GM18951 (cell line): ENCODE measurements at regions of chr16 and their contacts with region 1.

Region 1: DNA sequence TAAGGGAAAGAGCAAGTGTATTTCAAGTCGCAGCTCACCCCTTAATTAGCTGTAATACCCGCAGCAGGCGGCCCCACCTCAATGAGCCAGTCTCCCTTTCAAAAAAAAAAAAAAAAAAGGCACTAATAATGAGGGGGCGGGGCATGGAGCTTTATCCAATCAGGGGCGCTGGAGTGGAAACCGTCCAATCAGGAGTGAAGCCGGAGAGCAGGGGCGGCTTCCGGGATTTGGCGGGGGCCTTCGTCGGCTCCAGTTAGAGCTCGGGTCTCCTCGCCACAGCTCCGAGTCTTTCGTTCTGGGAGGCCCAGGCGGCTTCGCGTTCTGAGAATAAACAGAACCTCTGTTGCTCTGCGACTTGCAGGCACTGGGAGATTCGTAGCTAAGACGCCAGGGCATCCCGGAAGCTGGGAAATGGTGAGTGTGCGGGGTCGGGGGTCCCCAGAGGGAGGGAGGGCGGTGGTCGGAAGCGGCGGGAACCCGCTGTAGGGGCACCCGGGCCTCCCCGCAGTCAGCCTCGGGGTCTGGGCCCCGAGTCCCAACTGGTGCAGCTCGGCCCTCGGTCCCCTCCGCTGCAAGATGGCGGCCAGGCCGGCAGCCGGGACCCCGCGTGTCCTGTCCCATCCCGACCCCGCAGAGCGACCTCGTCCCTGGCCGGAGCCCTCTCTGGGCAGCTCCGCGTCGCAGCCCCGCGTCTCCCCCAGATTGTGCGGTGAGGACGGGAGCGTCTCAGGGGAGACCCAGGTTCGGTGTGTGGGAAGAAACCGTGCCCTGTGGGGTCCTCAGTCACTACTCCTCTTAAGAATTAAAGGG is at the start of gene ZNF267:
- POLR2A ChIP-seq: peak; percentile 88

Region 2: GRCh38 chr16:30984669-30985400 is 888.9 kb before region 1 on chr16 and contains the start of gene HSD3B7:
- in situ Hi-C with region 1: loop called (anchors 25 kb)
- POLR2A ChIP-seq: no peak

Region 3: DNA sequence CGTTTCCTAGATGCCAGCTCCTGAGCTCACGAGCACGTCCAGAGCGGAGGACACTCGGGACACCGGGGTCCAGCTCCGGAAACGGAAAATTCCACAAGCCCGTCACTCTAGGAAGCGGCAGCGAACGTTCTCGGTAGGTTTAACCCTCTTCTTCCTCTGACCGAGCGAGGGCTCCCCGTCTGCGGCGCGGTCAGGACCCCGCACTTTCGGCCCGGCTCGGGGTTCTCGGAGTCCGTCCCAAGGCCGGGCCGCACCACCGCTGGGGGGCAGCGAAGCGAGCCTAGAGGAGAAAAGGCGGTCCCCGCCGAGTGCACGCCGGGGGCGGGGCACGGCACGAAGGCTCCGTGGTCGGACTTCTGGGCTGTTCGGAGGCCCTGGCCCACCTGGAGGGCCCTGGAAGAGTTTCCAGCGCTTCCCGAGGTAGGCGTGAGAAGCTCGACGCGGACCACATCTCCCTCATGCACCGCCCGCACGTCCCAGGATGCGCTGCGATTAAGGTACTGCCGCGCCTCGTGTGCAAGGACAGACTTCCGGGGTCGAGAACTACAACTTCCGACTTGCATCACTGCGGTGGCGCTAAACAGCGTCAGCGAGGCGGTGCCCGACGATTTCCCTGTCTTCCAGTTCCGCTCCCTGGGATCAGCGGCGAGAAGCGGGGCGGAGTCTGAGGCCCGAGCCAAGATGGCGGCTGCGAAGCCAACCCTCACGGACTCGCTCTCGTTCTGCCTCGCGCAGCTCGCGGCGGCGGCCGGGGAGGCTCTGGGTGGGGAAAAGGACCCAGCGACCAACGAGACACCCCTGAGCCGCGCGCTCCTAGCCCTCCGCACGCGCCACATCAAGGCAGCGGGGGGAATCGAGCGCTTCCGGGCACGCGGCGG is 414.7 kb before region 1 on chr16 and contains the start of gene ARMC5:
- in situ Hi-C with region 1: loop called (anchors 25 kb)
- POLR2A ChIP-seq: peak; percentile 59